Cardiac septum (tissue), 1 donor: ENCODE measurements at regions of chr2 and their contacts with region 1.

Region 1: GRCh38 chr2:71609958-71610357 is 156.6 kb downstream of the DYSF start:
- DNase-seq: no peak

Region 2: DNA sequence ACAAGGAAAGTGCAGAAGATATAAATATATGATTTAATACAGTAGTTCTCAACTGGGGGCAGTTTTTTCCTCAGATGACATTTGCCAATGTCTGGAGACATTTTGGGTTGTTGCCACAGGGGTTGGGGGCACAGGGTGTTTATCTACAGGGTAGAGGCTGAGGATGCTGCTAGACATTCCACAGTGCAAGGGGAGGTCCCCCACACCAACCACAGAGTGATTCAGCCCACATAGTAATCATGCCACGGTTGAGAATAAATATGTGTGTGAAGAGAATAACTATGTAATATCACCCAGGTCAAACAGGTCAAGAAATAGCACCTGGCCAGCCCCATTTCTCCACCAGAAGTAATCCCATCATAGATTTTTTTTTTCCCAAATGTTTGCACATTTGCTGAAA is 138.7 kb before region 1 on chr2:
- intact Hi-C with region 1: loop called (anchors 10 kb)
- DNase-seq: no peak

Region 3: DNA sequence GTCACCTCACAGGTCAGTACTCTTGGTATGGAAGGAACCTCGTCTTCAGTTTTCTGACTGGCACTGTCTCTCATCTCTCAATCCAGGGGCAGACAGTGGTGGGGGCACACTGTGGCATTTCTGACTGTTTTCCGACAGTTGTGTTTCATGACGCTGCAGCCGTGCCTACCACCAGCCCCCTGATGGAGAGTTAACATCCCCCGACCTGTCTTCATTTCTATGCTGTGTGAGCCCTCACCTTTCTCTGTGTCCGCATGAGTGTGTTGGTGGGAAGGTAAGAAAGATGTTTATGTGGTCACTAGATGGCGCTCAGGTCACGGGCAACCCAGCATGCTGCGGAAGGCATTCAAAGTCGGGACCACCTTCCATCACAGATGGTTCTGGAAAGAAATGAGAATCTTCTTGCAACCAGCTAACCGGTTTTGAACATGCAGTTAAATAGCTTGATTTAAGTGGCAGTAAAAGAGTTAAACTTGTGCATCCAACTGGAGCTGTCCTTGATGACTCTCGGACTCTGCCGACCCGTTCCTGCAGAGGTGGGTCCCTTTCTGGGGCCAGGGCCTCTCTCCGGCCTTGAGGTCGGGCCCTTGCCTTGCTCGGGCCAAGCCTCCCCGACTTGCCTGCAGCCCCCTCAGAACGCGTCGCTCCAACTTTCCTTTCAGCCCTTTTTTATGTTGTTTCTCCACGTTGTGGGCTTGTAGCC is 64.2 kb before region 1 on chr2:
- intact Hi-C with region 1: loop called (anchors 5 kb)
- DNase-seq: peak; percentile 74

Region 4: DNA sequence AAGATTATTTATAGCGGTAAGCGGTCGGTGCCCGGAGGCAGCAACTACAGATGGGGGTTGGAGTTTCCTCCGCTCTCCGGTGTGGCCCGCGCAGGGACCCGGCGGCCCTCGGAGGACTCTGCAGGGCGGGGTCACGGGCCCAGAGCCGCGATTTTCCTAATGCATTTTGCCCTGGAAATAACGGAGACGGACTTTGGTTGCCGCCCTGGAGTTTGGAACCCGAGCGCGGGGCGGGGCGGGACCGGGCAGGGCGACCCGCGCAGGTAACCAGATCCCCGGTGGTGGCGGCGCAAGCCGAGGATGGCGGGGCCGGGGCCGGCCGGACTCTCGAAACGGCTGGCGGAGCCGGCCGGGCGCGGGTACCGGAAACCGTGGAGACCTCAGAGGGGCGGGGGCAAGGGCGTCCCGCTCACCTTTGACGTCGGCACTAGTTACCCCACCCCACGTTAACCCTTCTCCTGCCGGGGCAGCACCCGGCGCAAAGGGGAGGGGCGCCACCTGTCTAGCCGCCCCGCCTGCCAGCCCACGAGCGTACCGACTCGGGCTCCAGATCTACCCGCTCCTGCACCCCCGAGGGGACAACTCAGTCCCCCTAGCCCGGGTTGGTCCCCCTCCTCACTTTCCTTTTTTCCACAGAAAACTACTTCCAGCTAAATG is 534.8 kb after region 1 on chr2:
- intact Hi-C with region 1: loop called (anchors 5 kb)
- DNase-seq: no peak